IMR-90 (cell line): ENCODE measurements at regions of chr16 and their contacts with region 1.

Region 1: DNA sequence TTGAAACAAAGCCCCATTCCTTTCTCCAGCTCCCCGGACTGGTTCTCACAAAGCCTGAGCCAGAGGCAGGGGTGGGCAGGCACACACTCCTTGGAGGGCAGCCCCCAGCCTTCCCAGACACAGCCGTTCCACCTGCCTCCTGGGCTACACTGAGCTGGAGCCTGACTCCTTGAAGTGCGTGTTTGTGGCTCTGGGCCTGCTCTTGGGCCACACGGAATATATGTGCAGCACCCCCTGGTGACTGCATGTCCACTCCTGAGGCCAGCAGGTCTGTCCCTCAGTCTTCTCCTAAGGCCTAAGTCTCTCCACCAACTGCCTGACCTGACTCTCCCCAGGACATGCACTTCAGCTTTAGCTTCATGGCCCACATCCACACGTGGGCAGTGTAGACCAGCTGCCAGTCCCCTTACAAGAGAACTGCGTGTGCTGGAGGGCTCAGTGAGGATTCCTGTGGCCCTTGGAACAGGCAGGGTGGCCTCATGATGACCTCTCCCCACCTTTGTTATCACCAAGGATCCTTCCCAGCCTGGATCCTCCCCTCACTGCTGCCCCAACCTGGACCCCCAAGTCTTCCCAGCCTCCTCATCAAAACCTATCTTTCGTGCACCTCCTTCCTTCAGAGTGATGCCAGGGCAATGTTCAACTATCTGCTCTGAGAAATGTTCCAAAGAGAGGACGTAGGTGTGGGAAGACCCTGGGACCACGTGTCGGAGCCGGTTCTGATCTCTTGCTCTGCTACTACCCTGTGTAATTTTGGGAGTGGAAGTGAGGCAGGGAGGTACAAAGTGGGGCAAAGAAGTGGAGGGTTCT is 12.4 kb upstream of the SLC6A2 start:
- DNase-seq: peak; percentile 12
- ATAC-seq: peak; percentile 34; the same call in 1 of the 2 replicates
- H3K4me3 ChIP-seq: no peak overlapping the region
- H3K27ac ChIP-seq: no peak overlapping the region
- H3K4me1 ChIP-seq: peaks cover 4% of the 10 kb centered on the region
- H3K27me3 ChIP-seq: peaks cover 65% of the 10 kb centered on the region
- CTCF ChIP-seq: peak; percentile 20; the same call in 1 of the 2 replicates
- POLR2A ChIP-seq: no peak
- RAD21 ChIP-seq: peak; percentile 24

Region 2: DNA sequence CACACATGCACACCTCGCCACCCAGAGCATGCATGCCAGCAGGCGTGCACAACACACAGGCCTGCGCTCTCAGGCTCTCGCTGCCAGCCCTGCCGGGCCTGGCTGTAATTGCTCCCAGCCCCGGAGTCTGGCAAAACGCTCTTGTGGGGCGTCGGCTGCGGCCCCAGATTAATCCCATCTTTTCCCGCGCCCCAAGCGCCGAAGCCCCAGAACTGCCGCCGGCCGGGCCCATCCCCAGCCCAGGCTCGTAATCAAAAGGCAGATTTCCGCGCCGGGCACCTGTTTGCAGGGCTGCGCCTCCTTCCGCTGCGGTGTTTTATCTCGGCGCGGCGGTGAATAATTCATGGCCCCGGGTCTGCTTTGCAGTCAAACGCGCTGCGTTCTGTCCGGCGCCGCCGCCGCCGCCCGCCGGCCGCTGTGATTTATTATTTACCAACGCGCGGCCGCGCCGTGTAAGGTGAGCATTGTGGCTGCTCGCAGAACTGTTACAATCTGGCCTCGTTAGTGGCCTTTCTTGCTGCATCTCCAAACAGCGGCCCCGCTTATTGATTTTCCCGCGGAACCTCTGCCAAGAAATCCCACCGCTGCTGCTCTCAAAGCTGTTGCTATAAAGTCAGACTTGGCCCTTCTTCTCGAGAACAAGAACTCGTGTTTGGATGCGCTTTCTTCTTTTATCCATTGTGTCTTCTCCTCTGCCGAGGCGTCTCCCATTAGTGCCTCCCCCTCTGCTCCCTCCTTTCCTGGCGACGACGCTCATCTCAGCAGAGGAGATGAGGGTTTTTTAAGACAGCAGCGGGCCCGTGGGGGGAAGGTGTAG is 586.6 kb before region 1 on chr16:
- CTCF ChIA-PET with region 1: no interaction called
- POLR2A ChIA-PET with region 1: no interaction called
- dilution Hi-C with region 1: no loop called
- in situ Hi-C with region 1: no loop called
- intact Hi-C with region 1: no loop called
- DNase-seq: no peak
- ATAC-seq: no peak
- H3K4me3 ChIP-seq: no peak overlapping the region
- H3K27ac ChIP-seq: no peak overlapping the region
- H3K4me1 ChIP-seq: no peaks in the 10 kb centered on the region
- H3K27me3 ChIP-seq: peaks cover 13% of the 10 kb centered on the region; the same call in 1 of the 2 replicates
- CTCF ChIP-seq: no peak
- POLR2A ChIP-seq: no peak
- RAD21 ChIP-seq: no peak

Region 3: DNA sequence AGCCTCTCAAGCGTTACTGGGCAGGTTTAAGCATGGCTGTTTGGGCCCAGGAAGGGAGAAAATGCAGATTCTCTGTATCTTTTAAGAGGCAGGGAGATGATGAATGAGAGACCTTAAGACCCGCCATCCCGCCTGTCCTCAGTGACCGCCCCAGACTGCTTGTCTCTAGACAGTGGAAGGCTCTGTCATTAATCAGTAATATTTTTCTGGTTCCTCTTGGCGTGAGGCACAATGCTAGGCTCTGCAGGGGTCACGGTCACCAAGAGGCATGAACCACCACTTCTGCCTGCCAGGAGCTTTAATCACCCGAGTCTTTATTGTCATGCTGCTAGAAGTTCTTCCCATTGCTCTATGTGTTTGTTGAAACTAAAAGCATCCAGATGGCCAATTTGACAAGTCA is 15.5 kb after region 1 on chr16:
- CTCF ChIA-PET with region 1: interaction called, 11 read pairs
- POLR2A ChIA-PET with region 1: no interaction called
- dilution Hi-C with region 1: no loop called
- in situ Hi-C with region 1: no loop called
- intact Hi-C with region 1: no loop called
- DNase-seq: no peak
- ATAC-seq: no peak
- H3K4me3 ChIP-seq: no peak overlapping the region
- H3K27ac ChIP-seq: no peak overlapping the region
- H3K4me1 ChIP-seq: no peaks in the 10 kb centered on the region
- H3K27me3 ChIP-seq: peaks cover 70% of the 10 kb centered on the region
- CTCF ChIP-seq: no peak
- POLR2A ChIP-seq: no peak
- RAD21 ChIP-seq: no peak